ENCODE measurements at regions of chr21 and their contacts with region 1.

Region 1: GRCh38 chr21:31604591-31605190 is 54.8 kb upstream of the SOD1 start:
- DNase-seq: peak; percentile 74 to 78
- H3K4me3 ChIP-seq: no peak overlapping the region
- H3K4me1 ChIP-seq: no peaks in the 10 kb centered on the region
- H3K27me3 ChIP-seq: no peaks in the 10 kb centered on the region

Region 2: GRCh38 chr21:30268608-30269240 is 1336.0 kb before region 1 on chr21:
- in situ Hi-C with region 1: no loop called
- DNase-seq: no peak
- H3K4me3 ChIP-seq: no peak overlapping the region
- H3K4me1 ChIP-seq: no peaks in the 10 kb centered on the region
- H3K27me3 ChIP-seq: no peaks in the 10 kb centered on the region

Region 3: DNA sequence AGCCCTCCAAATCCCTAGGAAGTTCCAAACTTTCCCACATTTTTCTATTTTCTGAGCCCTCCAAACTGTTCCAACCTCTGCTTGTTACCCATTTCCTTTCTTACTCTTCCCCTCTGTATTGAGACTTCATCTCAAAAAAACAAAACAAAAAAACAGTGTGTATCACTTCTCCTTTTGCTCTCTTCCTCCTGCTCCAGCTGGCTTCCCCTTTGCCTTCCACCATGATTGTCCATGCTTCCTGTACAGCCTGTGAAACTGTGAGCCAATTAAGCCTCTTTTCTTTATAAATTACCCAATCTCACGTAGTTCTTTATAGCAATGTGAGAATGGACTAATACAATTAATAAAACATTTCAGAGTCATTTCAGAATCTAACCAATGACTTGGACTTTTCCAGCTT is 496.8 kb before region 1 on chr21:
- in situ Hi-C with region 1: loop called (anchors 10 kb)
- DNase-seq: no peak
- H3K4me3 ChIP-seq: no peak overlapping the region
- H3K4me1 ChIP-seq: no peaks in the 10 kb centered on the region
- H3K27me3 ChIP-seq: no peaks in the 10 kb centered on the region

Region 4: GRCh38 chr21:31198575-31198974 is 406.1 kb before region 1 on chr21:
- in situ Hi-C with region 1: loop called (anchors 5 kb)
- DNase-seq: peak in 1 of 2 experiments; percentile 55
- H3K4me3 ChIP-seq: no peak overlapping the region
- H3K4me1 ChIP-seq: no peaks in the 10 kb centered on the region
- H3K27me3 ChIP-seq: no peaks in the 10 kb centered on the region; the same call in 1 of the 2 replicates

Region 5: GRCh38 chr21:31273278-31273677 is 331.4 kb before region 1 on chr21:
- in situ Hi-C with region 1: no loop called
- DNase-seq: no peak
- H3K4me3 ChIP-seq: no peak overlapping the region
- H3K4me1 ChIP-seq: no peaks in the 10 kb centered on the region
- H3K27me3 ChIP-seq: no peaks in the 10 kb centered on the region

Region 6: DNA sequence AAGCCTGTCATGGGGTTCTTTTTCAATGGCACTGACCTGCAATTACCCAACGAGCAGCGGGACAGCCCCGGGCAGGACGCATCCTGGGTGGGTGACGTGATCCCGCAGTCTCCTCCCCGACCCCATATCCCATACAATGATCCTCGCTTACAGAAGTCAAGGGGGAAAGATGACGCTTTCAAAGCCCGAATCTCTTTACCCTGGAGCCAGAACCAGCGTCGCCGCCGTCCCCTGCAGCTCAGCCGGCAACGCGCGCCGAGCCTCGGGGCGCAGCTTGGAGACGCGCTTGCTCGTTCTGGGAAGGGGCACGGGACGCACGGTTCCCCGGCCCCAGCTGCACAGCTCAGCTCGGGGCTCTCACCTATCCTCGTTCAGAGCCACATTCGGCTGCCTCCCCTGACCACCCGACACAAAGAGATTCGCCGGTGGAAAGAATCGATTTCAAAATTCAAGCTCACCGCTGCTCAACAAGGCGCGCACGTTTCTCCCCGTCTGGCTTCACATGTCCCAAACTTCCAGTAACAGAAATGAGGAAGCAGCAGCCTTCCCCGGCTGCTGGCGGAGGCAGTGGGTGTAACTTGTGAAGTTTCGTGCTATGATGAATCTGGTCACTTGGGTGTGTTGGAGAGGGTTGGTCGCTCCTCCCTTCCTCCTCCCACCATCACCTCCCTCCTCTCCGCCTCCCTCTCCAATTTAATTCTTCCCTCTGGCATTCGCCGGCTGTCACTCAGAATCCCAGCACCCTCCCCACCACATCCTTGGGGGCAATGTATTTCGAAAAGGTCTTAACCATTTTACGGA is 260.8 kb before region 1 on chr21 and contains the start of gene TIAM1:
- in situ Hi-C with region 1: loop called (anchors 10 kb)
- DNase-seq: no peak
- H3K4me3 ChIP-seq: no peak within 1 kb of the TSS
- H3K4me1 ChIP-seq: no peaks in the 10 kb centered on the region
- H3K27me3 ChIP-seq: peaks cover 26% of the 10 kb centered on the region

Measured in HAP-1 (cell line).